ENCODE measurements at regions of chr1 and their contacts with region 1.

Region 1: DNA sequence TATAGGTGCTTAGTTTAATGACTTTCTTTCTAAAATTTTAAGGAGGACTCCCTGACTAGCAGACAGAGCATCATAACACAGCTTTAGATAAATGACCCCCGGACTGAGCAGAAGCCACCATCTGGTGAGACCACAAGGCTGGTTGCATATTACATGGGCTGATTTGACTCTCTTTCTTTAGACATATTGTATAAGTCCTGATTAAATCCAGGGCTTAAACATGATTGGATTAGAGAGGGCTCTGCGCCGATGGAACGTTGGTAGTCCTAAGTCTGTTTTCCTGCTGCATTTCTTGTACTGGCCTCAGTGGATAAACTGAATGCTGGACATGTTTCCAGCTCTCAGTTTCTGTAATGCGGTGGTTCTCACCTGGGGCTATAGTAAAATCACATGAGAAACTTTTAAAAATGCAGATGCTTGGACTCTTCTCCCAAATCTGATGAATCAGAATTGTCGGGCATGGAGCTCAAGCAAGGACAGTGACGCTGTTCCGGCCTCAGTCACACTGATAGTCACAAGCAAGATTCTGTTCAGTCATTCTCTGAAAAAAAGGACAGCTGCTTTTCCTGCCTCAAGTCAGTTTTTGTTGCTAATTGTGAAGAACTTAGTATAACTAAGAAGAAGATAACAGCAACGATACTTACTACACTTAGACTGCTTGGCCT is 16.6 kb downstream of the DDI2 start:
- H3K4me3 ChIP-seq: no peak overlapping the region
- H3K27ac ChIP-seq: no peak overlapping the region
- H3K4me1 ChIP-seq: no peaks in the 10 kb centered on the region
- CTCF ChIP-seq: no peak

Region 2: DNA sequence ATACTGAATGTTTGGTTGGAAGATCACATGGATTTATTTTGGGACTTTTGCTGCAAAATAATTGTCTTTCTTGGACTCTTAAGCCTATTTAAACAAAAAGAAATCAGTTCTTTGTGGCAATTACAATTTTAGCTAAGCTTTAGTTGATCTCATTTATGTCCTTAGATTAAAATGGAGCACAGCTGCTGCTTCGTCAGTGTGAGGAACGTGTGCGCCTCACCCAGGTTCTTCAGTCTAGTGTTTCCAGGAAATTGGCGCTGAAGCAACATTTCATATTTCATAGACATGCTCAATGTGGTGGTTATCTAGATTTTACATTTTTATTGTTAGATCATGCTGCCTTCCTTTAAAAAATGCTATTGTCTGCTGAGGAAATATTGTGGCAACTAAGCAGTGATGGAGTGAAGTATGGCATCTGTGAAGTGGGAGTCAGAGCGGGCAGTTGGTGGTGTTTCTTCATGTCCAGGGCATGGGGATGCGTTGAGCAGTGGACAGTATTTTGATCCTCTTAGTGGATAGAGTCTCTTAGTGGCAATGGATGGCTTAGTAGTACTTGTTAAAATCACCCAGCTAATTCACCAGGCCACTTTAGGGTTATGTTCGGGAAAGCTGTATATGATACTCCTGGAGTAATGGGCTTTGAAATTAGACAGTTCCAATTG is 11.0 kb before region 1 on chr1:
- CTCF ChIA-PET with region 1: no interaction called
- POLR2A ChIA-PET with region 1: interaction called, 12 read pairs
- H3K4me3 ChIP-seq: no peak overlapping the region
- H3K27ac ChIP-seq: no peak overlapping the region
- H3K4me1 ChIP-seq: peaks cover 19% of the 10 kb centered on the region
- CTCF ChIP-seq: no peak

Region 3: DNA sequence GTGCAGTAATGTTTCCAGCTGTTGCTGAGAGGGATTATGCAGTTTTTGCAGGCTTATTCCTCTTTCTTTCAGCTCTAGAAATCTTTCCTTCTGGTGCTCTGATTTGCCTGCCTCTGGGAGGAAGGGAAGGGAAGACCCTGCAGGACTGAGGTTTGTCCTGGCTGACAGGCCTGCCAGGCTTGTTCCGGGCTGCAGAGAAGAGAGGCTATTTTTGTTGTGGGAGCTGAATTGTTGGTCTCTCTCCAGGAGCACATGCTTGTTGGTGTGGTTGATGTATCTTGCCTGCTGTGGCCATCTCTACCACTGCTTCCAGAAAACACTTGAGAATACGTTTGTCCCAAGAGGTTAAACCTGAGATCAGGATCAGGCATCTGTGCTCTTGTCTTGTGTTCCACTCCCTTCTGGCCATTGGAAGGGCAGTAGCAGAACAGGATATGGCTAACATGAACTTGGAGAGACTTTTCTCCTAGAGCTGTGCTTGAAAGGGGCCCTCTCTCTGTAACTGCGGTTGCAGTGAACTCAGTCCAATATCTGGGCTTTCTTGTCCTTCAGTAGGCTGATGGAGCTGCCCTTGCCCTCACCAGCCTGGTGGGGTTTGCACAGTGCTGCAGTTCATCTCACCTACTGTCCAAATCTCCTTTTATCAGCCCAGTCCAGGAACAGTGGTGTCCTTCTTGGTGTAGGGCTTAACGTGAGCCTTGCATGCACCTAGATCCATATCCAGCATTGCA is 80.7 kb after region 1 on chr1:
- CTCF ChIA-PET with region 1: no interaction called
- POLR2A ChIA-PET with region 1: interaction called, 11 read pairs
- H3K4me3 ChIP-seq: no peak overlapping the region
- H3K27ac ChIP-seq: no peak overlapping the region
- H3K4me1 ChIP-seq: no peaks in the 10 kb centered on the region
- CTCF ChIP-seq: no peak

Measured in HEK293 (cell line).